CD4-positive, alpha-beta memory T cell (primary cell): ENCODE measurements at regions of chr3 and their contacts with region 1.

Region 1: DNA sequence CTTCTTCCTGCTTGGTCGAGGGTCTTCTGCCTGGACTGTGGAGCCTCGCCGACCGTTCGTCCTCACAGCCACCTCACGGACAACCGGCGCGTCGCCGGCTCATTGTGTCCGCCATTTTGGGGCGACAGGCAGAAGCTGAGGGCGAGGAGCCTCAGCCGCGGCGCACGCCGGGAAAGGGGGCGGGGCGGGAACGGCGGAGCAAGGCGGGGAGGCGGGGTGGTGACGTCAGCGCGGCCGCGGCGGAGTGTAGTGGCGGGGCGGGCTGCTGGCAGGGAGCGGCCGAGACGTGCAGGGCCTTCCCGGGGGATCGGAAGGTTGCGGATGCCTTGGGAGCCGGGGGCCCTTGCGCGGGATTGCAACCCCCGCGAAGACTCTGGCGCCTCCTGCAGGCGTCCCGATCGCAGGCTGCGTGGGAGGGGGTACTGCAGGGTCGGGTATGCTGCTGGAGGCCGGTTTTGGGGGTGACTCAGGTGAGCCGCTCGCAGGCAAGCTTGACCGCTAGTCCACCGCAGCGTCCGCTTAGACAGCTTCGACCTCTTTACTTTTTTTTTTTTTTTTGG is at the start of gene WDR82:
- DNase-seq: peak; percentile 94 to 97 (median 95)
- H3K4me3 ChIP-seq: peak within 1 kb of the TSS; percentile 58 to 71
- H3K4me3 Mint-ChIP-seq: peak within 1 kb of the TSS; percentile 92 to 99 (median 98)
- H3K27ac ChIP-seq: peak within 1 kb of the TSS; percentile 87
- H3K27ac Mint-ChIP-seq: peak within 1 kb of the TSS; percentile 96 to 100 (median 100)
- H3K4me1 ChIP-seq: peaks cover 76% of the 10 kb centered on the region
- H3K4me1 Mint-ChIP-seq: peaks cover 40 to 87% (median 56%) of the 10 kb centered on the region in 4 donors
- H3K27me3 ChIP-seq: no peaks in the 10 kb centered on the region
- H3K27me3 Mint-ChIP-seq: peaks cover 0 to 3% of the 10 kb centered on the region in 2 donors
- total RNA-seq, gene WDR82: 149 to 150 TPM

Region 2: DNA sequence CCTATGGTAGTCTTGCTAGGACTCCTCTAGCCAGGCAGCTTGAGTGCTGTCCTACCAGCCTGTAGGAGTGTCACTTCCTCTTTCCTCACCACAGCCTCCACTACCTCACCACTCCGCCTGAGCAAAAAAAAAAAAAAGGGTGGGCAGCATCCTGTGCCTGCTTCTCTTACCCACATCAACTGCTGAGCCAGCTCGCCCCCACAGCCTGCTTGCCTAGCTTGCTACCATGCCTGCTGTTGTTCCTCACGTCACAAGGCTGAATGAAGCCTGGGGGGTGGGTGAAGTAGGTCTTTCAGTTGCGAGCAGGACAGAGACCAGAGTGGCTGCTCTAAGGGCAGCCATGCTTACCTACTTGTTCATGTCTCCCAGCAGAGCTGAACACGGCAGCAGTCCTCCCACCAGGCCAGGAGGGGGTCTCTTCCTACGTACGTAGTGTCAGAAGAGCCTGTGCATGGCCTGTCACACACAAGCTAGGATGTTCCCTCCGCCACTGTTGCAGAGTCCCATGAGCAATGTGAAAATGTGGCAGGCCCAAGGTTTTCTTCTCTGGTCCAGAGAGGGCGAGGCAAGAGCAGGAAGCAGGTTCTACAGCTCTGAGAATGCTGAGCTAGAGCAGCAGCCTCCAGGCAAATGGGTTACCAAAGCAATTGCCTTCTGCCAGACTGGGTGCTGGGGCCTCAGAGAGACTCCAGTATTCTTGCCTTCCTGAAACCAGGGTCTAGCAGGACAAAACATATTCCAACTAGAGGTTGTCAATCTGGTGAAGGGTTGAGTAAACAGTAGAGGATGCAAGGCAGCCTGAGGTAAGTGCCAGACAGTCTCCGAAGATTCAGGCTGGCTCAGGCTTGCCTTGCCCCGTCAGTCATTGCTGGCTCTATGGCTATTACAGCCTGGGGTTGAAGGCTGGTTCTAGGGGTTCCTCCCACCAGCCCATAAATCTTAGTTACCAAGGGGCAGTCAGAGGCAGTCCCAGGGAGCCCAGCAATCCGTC is 25.0 kb before region 1 on chr3:
- CTCF ChIA-PET with region 1: interaction called, 684 read pairs
- POLR2A ChIA-PET with region 1: interaction called, 1,950 read pairs
- intact Hi-C with region 1: loop called (anchors 1 kb)
- DNase-seq: peak; percentile 90 to 97 (median 93)
- H3K4me3 ChIP-seq: peak overlapping the region; percentile 10 to 16
- H3K4me3 Mint-ChIP-seq: peak overlapping the region; percentile 85 to 97 (median 90)
- H3K27ac ChIP-seq: peak overlapping the region; percentile 86
- H3K27ac Mint-ChIP-seq: peak overlapping the region; percentile 97 to 100 (median 100)
- H3K4me1 ChIP-seq: peaks cover 99% of the 10 kb centered on the region
- H3K4me1 Mint-ChIP-seq: peaks cover 54 to 99% (median 82%) of the 10 kb centered on the region in 4 donors
- H3K27me3 ChIP-seq: no peaks in the 10 kb centered on the region
- H3K27me3 Mint-ChIP-seq: no peaks in the 10 kb centered on the region

Region 3: DNA sequence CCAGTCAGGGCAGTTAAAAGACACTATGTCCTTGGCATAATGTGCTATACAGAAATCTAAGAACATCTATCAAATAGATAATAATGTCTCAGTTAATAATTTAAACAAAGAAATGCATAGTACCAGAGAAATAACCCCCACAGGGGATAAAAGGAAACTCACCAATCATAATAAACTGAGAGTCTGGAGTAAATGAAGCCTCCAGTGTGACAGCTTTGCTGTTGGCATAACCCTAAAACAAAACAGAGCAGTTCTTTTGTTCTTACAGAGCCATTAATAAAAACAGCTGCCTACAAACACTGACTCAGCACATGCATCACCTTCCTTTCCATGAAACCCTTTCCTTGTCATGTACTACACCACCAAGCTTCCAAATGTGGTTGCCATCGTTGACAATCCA is 19.6 kb before region 1 on chr3:
- CTCF ChIA-PET with region 1: interaction called, 684 read pairs
- POLR2A ChIA-PET with region 1: interaction called, 1,950 read pairs
- intact Hi-C with region 1: no loop called
- DNase-seq: no peak
- H3K4me3 ChIP-seq: no peak overlapping the region
- H3K4me3 Mint-ChIP-seq: no peak overlapping the region
- H3K27ac ChIP-seq: peak overlapping the region; percentile 45
- H3K27ac Mint-ChIP-seq: peak overlapping the region; percentile 49 to 97 (median 83)
- H3K4me1 ChIP-seq: peaks cover 97% of the 10 kb centered on the region
- H3K4me1 Mint-ChIP-seq: peaks cover 57 to 98% (median 83%) of the 10 kb centered on the region in 4 donors
- H3K27me3 ChIP-seq: no peaks in the 10 kb centered on the region
- H3K27me3 Mint-ChIP-seq: no peaks in the 10 kb centered on the region

Region 4: GRCh38 chr3:52291508-52292181 is 13.1 kb after region 1 on chr3:
- CTCF ChIA-PET with region 1: interaction called, 19 read pairs
- POLR2A ChIA-PET with region 1: interaction called, 153 read pairs
- intact Hi-C with region 1: loop called (anchors 1 kb)
- DNase-seq: no peak
- H3K4me3 ChIP-seq: no peak overlapping the region
- H3K4me3 Mint-ChIP-seq: peak overlapping the region in 4 of 8 donors; percentile 29 to 78 (median 40)
- H3K27ac ChIP-seq: no peak overlapping the region
- H3K27ac Mint-ChIP-seq: peak overlapping the region in 4 of 7 donors; percentile 35 to 83 (median 64)
- H3K4me1 ChIP-seq: peaks cover 31% of the 10 kb centered on the region
- H3K4me1 Mint-ChIP-seq: peaks cover 18 to 40% (median 27%) of the 10 kb centered on the region in 4 donors
- H3K27me3 ChIP-seq: no peaks in the 10 kb centered on the region
- H3K27me3 Mint-ChIP-seq: no peaks in the 10 kb centered on the region

Region 5: GRCh38 chr3:52317208-52318000 is 38.8 kb after region 1 on chr3:
- CTCF ChIA-PET with region 1: no interaction called
- POLR2A ChIA-PET with region 1: interaction called, 9 read pairs
- intact Hi-C with region 1: loop called (anchors 5 kb)
- DNase-seq: peak; percentile 71 to 77 (median 74)
- H3K4me3 ChIP-seq: peak overlapping the region in 1 of 2 donors; percentile 31
- H3K4me3 Mint-ChIP-seq: peak overlapping the region; percentile 34 to 78 (median 65)
- H3K27ac ChIP-seq: peak overlapping the region; percentile 23
- H3K27ac Mint-ChIP-seq: peak overlapping the region; percentile 10 to 87 (median 82)
- H3K4me1 ChIP-seq: peaks cover 16% of the 10 kb centered on the region
- H3K4me1 Mint-ChIP-seq: peaks cover 9 to 30% (median 15%) of the 10 kb centered on the region in 4 donors
- H3K27me3 ChIP-seq: no peaks in the 10 kb centered on the region
- H3K27me3 Mint-ChIP-seq: no peaks in the 10 kb centered on the region

Region 6: DNA sequence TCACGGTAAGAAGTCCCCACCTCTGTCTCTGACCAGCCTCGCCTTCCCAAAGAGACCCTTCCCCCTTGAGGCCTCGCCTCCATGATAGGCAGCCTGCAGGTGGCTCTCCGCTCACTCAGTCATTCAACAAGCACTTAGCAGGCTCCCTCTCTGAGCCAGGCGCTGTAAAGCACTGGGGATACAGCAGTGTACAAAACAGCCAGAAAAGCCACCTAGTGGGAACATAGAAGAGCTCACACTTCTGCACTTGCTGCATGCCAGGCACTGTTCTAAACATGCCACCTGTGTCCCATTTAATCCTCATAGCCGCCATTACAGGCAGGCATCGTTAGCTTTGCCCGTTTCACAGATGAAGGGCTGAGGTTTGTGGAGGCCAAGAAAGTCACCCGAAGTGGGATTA is 110.3 kb after region 1 on chr3:
- CTCF ChIA-PET with region 1: no interaction called
- POLR2A ChIA-PET with region 1: no interaction called
- intact Hi-C with region 1: no loop called
- DNase-seq: no peak
- H3K4me3 ChIP-seq: no peak overlapping the region
- H3K4me3 Mint-ChIP-seq: no peak overlapping the region
- H3K27ac ChIP-seq: no peak overlapping the region
- H3K27ac Mint-ChIP-seq: no peak overlapping the region
- H3K4me1 ChIP-seq: no peaks in the 10 kb centered on the region
- H3K4me1 Mint-ChIP-seq: no peaks in the 10 kb centered on the region
- H3K27me3 ChIP-seq: no peaks in the 10 kb centered on the region
- H3K27me3 Mint-ChIP-seq: no peaks in the 10 kb centered on the region